ENCODE measurements at regions of chr14 and their contacts with region 1.

Region 1: DNA sequence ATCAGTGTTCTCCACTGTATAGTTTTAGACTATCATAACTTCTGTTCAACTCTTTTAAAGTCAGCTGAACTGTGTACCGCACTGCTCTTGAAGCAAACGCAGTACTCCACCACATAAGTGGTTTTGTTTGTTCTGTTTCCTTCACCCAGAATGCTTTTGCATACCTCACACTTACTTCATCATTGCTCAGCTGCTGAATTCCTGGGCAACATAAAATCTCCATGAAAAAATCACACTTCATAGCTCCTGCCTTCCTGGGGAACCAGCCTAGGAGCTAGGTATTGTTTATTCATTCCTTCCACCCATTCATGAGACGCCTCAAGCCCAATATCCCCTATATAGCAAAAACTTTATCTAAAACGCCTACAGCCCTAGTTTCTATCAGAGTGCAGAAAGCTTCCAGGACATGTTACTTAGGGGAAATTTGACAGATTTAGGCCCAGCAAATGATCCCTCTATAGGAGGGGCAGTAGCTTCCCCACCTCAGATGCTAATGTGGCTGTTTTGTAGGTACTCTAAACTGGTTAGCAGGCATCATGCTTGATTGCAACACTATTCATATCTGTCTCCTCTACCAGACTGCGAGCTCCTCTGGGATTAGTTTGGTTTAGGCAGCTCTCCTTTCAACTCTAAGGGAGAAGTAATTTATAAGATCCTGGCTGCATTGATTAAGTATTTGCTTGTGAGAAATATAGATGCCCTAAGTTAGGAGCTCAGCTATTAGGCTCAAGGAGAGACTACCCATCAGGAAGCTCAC is 44.5 kb downstream of the LRRC9 start:
- DNase-seq: peak in 6 of 9 donors; percentile 6 to 38 (median 20)
- ATAC-seq: peak; percentile 44
- H3K4me3 ChIP-seq: no peak overlapping the region
- H3K4me3 Mint-ChIP-seq: peak overlapping the region; percentile 77 to 95 (median 88)
- H3K27ac ChIP-seq: no peak overlapping the region
- H3K27ac Mint-ChIP-seq: peak overlapping the region in 8 of 9 donors; percentile 40 to 99 (median 88)
- H3K4me1 ChIP-seq: no peaks in the 10 kb centered on the region
- H3K4me1 Mint-ChIP-seq: peaks cover 3 to 14% (median 10%) of the 10 kb centered on the region in 7 donors
- H3K27me3 ChIP-seq: no peaks in the 10 kb centered on the region
- H3K27me3 Mint-ChIP-seq: peaks cover 0 to 15% (median 5%) of the 10 kb centered on the region in 5 donors

Region 2: GRCh38 chr14:59428581-59429012 is 535.8 kb before region 1 on chr14:
- CTCF ChIA-PET with region 1: no interaction called
- POLR2A ChIA-PET with region 1: no interaction called
- intact Hi-C with region 1: no loop called
- DNase-seq: no peak
- ATAC-seq: no peak
- H3K4me3 ChIP-seq: no peak overlapping the region
- H3K4me3 Mint-ChIP-seq: no peak overlapping the region
- H3K27ac ChIP-seq: no peak overlapping the region
- H3K27ac Mint-ChIP-seq: no peak overlapping the region
- H3K4me1 ChIP-seq: no peaks in the 10 kb centered on the region
- H3K4me1 Mint-ChIP-seq: no peaks in the 10 kb centered on the region
- H3K27me3 ChIP-seq: no peaks in the 10 kb centered on the region
- H3K27me3 Mint-ChIP-seq: peaks cover 0 to 14% (median 9%) of the 10 kb centered on the region in 5 donors

Region 3: GRCh38 chr14:60064491-60065072 is 100.2 kb after region 1 on chr14:
- CTCF ChIA-PET with region 1: interaction called, 7 read pairs
- POLR2A ChIA-PET with region 1: no interaction called
- intact Hi-C with region 1: loop called (anchors 1 kb)
- DNase-seq: peak in 4 of 9 donors; percentile 28 to 39 (median 36)
- ATAC-seq: peak; percentile 70
- H3K4me3 ChIP-seq: no peak overlapping the region
- H3K4me3 Mint-ChIP-seq: no peak overlapping the region
- H3K27ac ChIP-seq: no peak overlapping the region
- H3K27ac Mint-ChIP-seq: no peak overlapping the region
- H3K4me1 ChIP-seq: no peaks in the 10 kb centered on the region
- H3K4me1 Mint-ChIP-seq: no peaks in the 10 kb centered on the region
- H3K27me3 ChIP-seq: no peaks in the 10 kb centered on the region
- H3K27me3 Mint-ChIP-seq: peaks cover 0 to 7% (median 4%) of the 10 kb centered on the region in 5 donors

Measured in naive thymus-derived CD4-positive, alpha-beta T cell (primary cell).